GM12878 (cell line): ENCODE measurements at regions of chr5 and their contacts with region 1.

Region 1: GRCh38 chr5:100840384-100840783 is 62.7 kb downstream of the ST8SIA4 start:
- DNase-seq: peak; percentile 81
- ATAC-seq: peak; percentile 84
- H3K4me3 ChIP-seq: no peak overlapping the region
- H3K27ac ChIP-seq: peak overlapping the region; percentile 85
- H3K4me1 ChIP-seq: peaks cover 28% of the 10 kb centered on the region
- H3K27me3 ChIP-seq: no peaks in the 10 kb centered on the region
- CTCF ChIP-seq: 0 out of 6 replicates have a peak, but pooled peaks of 1 of the 3 experiments have one; percentile 9
- EP300 ChIP-seq: peak; percentile 84 to 86; a peak in 3 of 4 replicates
- POLR2A ChIP-seq: no peak
- RAD21 ChIP-seq: peak; percentile 32; the same call in 1 of the 2 replicates

Region 2: GRCh38 chr5:100560860-100561259 is 279.5 kb before region 1 on chr5:
- CTCF ChIA-PET with region 1: no interaction called
- POLR2A ChIA-PET with region 1: no interaction called
- RAD21 ChIA-PET with region 1: no interaction called
- SMC1A ChIA-PET with region 1: no interaction called
- in situ Hi-C with region 1: no loop called
- intact Hi-C with region 1: no loop called
- DNase-seq: no peak
- ATAC-seq: no peak
- H3K4me3 ChIP-seq: no peak overlapping the region
- H3K27ac ChIP-seq: no peak overlapping the region
- H3K4me1 ChIP-seq: no peaks in the 10 kb centered on the region
- H3K27me3 ChIP-seq: no peaks in the 10 kb centered on the region
- CTCF ChIP-seq: no peak
- EP300 ChIP-seq: no peak
- POLR2A ChIP-seq: no peak
- RAD21 ChIP-seq: no peak

Region 3: DNA sequence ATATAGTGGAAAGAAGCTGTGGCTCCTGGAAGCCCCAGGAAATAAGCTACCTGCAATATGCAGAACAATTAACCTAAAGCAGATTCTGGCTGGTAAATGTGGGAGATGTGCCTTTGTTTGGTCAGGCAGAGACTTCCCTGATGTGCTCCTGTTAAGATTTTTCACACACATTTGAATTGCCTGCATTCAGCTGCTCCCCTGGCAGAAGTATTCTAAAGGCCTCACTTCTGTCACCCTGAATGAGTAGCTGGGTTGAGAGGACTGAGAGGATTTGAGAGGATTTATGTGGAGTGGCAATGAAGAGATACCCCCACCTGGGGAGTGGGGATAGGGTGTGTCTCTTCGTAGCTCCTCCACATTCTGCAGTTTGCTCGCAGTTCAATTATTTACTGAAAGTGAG is 67.8 kb before region 1 on chr5:
- CTCF ChIA-PET with region 1: interaction called, 24 read pairs
- POLR2A ChIA-PET with region 1: interaction called, 7 read pairs
- RAD21 ChIA-PET with region 1: interaction called, 45 read pairs
- SMC1A ChIA-PET with region 1: interaction called, 85 read pairs
- in situ Hi-C with region 1: no loop called
- intact Hi-C with region 1: loop called (anchors 5 kb)
- DNase-seq: no peak
- ATAC-seq: no peak; the same call in 2 of the 3 replicates
- H3K4me3 ChIP-seq: no peak overlapping the region
- H3K27ac ChIP-seq: no peak overlapping the region
- H3K4me1 ChIP-seq: peaks cover 10% of the 10 kb centered on the region
- H3K27me3 ChIP-seq: no peaks in the 10 kb centered on the region
- CTCF ChIP-seq: no peak
- EP300 ChIP-seq: no peak
- POLR2A ChIP-seq: no peak
- RAD21 ChIP-seq: no peak

Region 4: DNA sequence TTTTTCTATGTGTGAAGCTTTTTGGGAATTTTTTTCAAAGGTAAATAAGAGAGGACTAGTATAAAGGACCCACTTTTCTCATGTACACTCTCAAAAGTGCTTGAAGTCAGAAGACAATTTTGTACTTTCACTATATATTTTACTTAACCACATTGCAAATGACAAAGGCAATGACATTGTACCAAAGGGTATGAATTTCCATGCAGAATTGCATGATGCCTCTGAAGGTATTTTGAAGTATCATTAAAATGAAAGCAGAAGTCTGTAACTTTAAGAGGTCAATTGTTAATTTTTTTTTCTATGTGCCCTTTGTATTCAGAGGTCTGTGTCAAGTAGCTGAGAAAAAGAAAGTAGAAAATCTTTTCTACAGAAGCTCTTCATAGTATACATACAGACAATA is 22.0 kb before region 1 on chr5:
- CTCF ChIA-PET with region 1: interaction called, 7 read pairs
- POLR2A ChIA-PET with region 1: interaction called, 4 read pairs
- RAD21 ChIA-PET with region 1: interaction called, 33 read pairs
- SMC1A ChIA-PET with region 1: interaction called, 56 read pairs
- in situ Hi-C with region 1: no loop called
- intact Hi-C with region 1: no loop called
- DNase-seq: no peak
- ATAC-seq: peak; percentile 67
- H3K4me3 ChIP-seq: no peak overlapping the region
- H3K27ac ChIP-seq: no peak overlapping the region; the same call in 1 of the 2 replicates
- H3K4me1 ChIP-seq: peaks cover 4% of the 10 kb centered on the region; the same call in 1 of the 2 replicates
- H3K27me3 ChIP-seq: no peaks in the 10 kb centered on the region
- CTCF ChIP-seq: no peak
- EP300 ChIP-seq: no peak
- POLR2A ChIP-seq: no peak
- RAD21 ChIP-seq: no peak

Region 5: DNA sequence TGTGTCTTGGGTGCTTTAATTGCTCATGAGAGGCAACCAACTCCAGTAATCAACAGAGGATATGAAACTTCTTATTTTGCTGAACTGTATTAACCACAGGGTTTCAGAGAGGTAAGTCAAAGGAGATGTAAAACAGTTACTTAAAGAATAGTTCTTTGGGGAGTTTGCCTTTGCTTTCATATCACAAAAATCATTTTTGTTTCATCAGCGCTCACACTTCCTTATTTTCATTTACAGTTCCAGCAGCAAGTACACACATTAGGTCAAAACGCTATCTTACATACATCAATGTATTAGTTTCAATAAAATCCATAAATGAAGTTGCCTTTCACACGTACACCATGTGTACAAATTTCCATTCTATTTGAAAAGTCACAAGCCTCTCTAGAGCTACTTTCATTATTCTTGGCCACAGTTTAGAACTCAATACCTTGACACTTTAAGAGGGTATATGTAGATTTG is 12.6 kb after region 1 on chr5:
- CTCF ChIA-PET with region 1: interaction called, 43 read pairs
- POLR2A ChIA-PET with region 1: interaction called, 41 read pairs
- RAD21 ChIA-PET with region 1: interaction called, 93 read pairs
- SMC1A ChIA-PET with region 1: interaction called, 147 read pairs
- in situ Hi-C with region 1: no loop called
- intact Hi-C with region 1: loop called (anchors 2 kb)
- DNase-seq: peak; percentile 89
- ATAC-seq: peak; percentile 89
- H3K4me3 ChIP-seq: peak overlapping the region; percentile 21; the same call in 1 of the 2 replicates
- H3K27ac ChIP-seq: peak overlapping the region; percentile 94
- H3K4me1 ChIP-seq: peaks cover 38% of the 10 kb centered on the region
- H3K27me3 ChIP-seq: no peaks in the 10 kb centered on the region
- CTCF ChIP-seq: no peak
- EP300 ChIP-seq: peak; percentile 95 to 96
- POLR2A ChIP-seq: no peak
- RAD21 ChIP-seq: peak; percentile 20; the same call in 1 of the 2 replicates

Region 6: GRCh38 chr5:100890461-100891008 is 50.2 kb after region 1 on chr5:
- CTCF ChIA-PET with region 1: interaction called, 15 read pairs
- POLR2A ChIA-PET with region 1: interaction called, 15 read pairs
- RAD21 ChIA-PET with region 1: interaction called, 289 read pairs
- SMC1A ChIA-PET with region 1: interaction called, 303 read pairs
- in situ Hi-C with region 1: no loop called
- intact Hi-C with region 1: no loop called
- DNase-seq: peak; percentile 64
- ATAC-seq: peak; percentile 73
- H3K4me3 ChIP-seq: peak overlapping the region; percentile 58
- H3K27ac ChIP-seq: peak overlapping the region; percentile 87
- H3K4me1 ChIP-seq: peaks cover 15% of the 10 kb centered on the region; the same call in 1 of the 2 replicates
- H3K27me3 ChIP-seq: no peaks in the 10 kb centered on the region
- CTCF ChIP-seq: no peak
- EP300 ChIP-seq: peak; percentile 46 to 57; a peak in 2 of 4 replicates
- POLR2A ChIP-seq: no peak
- RAD21 ChIP-seq: 0 out of 2 replicates have a peak, but pooled peaks have one; percentile 2